Gastrocnemius medialis (tissue), 4 donors: ENCODE measurements at regions of chr6 and their contacts with region 1.

Region 1: GRCh38 chr6:2848851-2849250 is 7.2 kb upstream of the SERPINB1 start:
- DNase-seq: no peak
- ATAC-seq: no peak
- H3K4me3 ChIP-seq: no peak overlapping the region
- H3K27ac ChIP-seq: no peak overlapping the region
- H3K4me1 ChIP-seq: peaks cover 16% of the 10 kb centered on the region in 2 donors
- H3K27me3 ChIP-seq: no peaks in the 10 kb centered on the region
- CTCF ChIP-seq: no peak
- POLR2A ChIP-seq: no peak

Region 2: GRCh38 chr6:2791124-2791974 is 57.5 kb before region 1 on chr6:
- in situ Hi-C with region 1: loop called in 3 of 4 experiments (anchors 10 kb)
- intact Hi-C with region 1: loop called (anchors 1 kb)
- DNase-seq: peak; percentile 61 to 78
- ATAC-seq: peak; percentile 84 to 85
- H3K4me3 ChIP-seq: peak overlapping the region in 3 of 4 donors; percentile 24 to 29 (median 27)
- H3K27ac ChIP-seq: peak overlapping the region; percentile 78 to 80 (median 79)
- H3K4me1 ChIP-seq: peaks cover 23 to 31% of the 10 kb centered on the region in 2 donors
- H3K27me3 ChIP-seq: no peaks in the 10 kb centered on the region
- CTCF ChIP-seq: peak; percentile 74 to 84 (median 78)
- POLR2A ChIP-seq: no peak

Region 3: GRCh38 chr6:2900821-2901644 is 52.2 kb after region 1 on chr6:
- in situ Hi-C with region 1: no loop called
- intact Hi-C with region 1: loop called (anchors 2 kb)
- DNase-seq: no peak
- ATAC-seq: no peak
- H3K4me3 ChIP-seq: peak overlapping the region in 1 of 4 donors; percentile 69
- H3K27ac ChIP-seq: peak overlapping the region in 1 of 4 donors; percentile 4
- H3K4me1 ChIP-seq: peaks cover 5 to 12% of the 10 kb centered on the region in 2 donors
- H3K27me3 ChIP-seq: peaks cover 0 to 6% (median 0%) of the 10 kb centered on the region in 3 donors
- CTCF ChIP-seq: no peak
- POLR2A ChIP-seq: no peak

Region 4: DNA sequence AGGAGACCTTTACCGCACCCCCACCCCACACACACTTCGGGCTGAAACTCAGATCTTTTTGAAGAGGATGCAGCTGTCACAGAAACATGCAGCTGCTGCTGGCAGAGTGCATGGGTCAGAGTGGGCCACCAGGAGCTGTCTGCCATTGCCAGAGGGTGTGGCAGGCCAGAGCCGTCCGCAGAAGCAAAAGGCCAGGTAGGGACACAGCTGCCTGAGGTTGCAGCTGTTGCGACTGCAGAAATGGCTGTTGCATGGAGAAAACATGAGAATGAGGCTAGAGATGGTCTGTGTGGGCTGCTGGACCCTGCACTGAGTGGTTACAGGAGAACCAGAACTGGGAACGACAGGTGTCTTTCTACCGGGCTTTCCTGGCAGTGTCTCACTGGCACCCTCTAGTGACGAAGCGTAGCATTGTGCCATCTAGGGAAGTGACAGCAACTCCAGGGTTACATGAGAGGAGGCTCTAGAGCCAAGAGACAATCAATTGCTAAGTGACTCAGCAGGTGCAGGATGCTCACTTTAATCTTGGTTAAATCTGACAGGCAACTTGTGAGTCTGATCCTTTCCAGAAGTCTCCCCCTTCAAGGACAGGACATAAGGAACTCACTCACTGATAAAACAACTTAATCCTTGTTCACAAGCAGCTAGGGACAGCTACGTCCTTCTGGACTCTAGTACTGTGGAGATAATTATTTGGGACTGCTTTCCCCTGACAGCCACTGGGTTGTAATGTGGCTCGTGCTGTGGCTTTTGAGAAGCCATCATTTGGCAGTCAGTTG is 83.3 kb after region 1 on chr6:
- in situ Hi-C with region 1: loop called (anchors 5 to 10 kb)
- intact Hi-C with region 1: loop called (anchors 1 kb)
- DNase-seq: peak; percentile 72 to 88
- ATAC-seq: peak; percentile 99 to 100
- H3K4me3 ChIP-seq: peak overlapping the region in 1 of 4 donors; percentile 6
- H3K27ac ChIP-seq: peak overlapping the region; percentile 33 to 59 (median 54)
- H3K4me1 ChIP-seq: peaks cover 4 to 5% of the 10 kb centered on the region in 2 donors
- H3K27me3 ChIP-seq: no peaks in the 10 kb centered on the region
- CTCF ChIP-seq: peak; percentile 87 to 98 (median 91)
- POLR2A ChIP-seq: no peak

Region 5: GRCh38 chr6:3052481-3053230 is 203.8 kb after region 1 on chr6:
- in situ Hi-C with region 1: loop called in 2 of 4 experiments (anchors 25 kb)
- intact Hi-C with region 1: loop called (anchors 2 kb)
- DNase-seq: no peak
- ATAC-seq: no peak
- H3K4me3 ChIP-seq: no peak overlapping the region
- H3K27ac ChIP-seq: no peak overlapping the region
- H3K4me1 ChIP-seq: peaks cover 4 to 14% of the 10 kb centered on the region in 2 donors
- H3K27me3 ChIP-seq: no peaks in the 10 kb centered on the region
- CTCF ChIP-seq: no peak
- POLR2A ChIP-seq: no peak